ENCODE measurements at regions of chr3 and their contacts with region 1.

Region 1: GRCh38 chr3:99505646-99506269 is 132.6 kb upstream of the COL8A1 start:
- DNase-seq: peak; percentile 91
- ATAC-seq: peak; percentile 97
- H3K4me3 ChIP-seq: no peak overlapping the region
- H3K27ac ChIP-seq: peak overlapping the region; percentile 41
- H3K4me1 ChIP-seq: peaks cover 6% of the 10 kb centered on the region; the same call in 1 of the 2 replicates
- H3K27me3 ChIP-seq: no peaks in the 10 kb centered on the region
- CTCF ChIP-seq: no peak
- EP300 ChIP-seq: peak; percentile 68 to 81; a peak in 3 of 4 replicates
- POLR2A ChIP-seq: no peak
- RAD21 ChIP-seq: peak; percentile 22; the same call in 1 of the 2 replicates

Region 2: DNA sequence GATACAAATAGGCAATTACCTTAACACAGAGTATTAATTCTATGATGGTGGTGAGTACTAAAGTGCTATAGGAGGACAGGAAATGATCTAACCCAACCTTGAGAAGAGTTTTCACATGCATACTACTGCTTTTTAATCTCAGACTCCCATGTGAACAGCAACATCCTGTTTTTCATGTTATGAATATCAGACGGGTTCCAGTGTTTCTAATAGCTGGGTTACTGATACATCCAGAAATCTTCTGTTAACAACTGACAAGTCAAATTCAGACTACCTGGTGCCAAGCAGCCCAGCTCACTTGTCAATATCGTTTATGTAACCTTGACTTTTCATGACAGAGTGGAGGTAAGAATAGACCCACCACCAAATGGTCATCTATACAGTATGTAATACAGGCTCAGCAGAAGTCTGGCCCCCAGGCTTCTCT is 87.5 kb before region 1 on chr3:
- CTCF ChIA-PET with region 1: interaction called, 6 read pairs
- POLR2A ChIA-PET with region 1: no interaction called
- RAD21 ChIA-PET with region 1: interaction called, 4 read pairs
- SMC1A ChIA-PET with region 1: interaction called, 9 read pairs
- in situ Hi-C with region 1: no loop called
- intact Hi-C with region 1: loop called (anchors 1 kb)
- DNase-seq: peak; percentile 52
- ATAC-seq: peak; percentile 82
- H3K4me3 ChIP-seq: no peak overlapping the region
- H3K27ac ChIP-seq: peak overlapping the region; percentile 89
- H3K4me1 ChIP-seq: peaks cover 11% of the 10 kb centered on the region
- H3K27me3 ChIP-seq: no peaks in the 10 kb centered on the region
- CTCF ChIP-seq: no peak
- EP300 ChIP-seq: no peak
- POLR2A ChIP-seq: no peak
- RAD21 ChIP-seq: peak; percentile 20; the same call in 1 of the 2 replicates

Region 3: GRCh38 chr3:99526921-99527320 is 21.2 kb after region 1 on chr3:
- CTCF ChIA-PET with region 1: interaction called, 303 read pairs
- POLR2A ChIA-PET with region 1: interaction called, 3 read pairs
- RAD21 ChIA-PET with region 1: interaction called, 90 read pairs
- SMC1A ChIA-PET with region 1: interaction called, 270 read pairs
- in situ Hi-C with region 1: no loop called
- intact Hi-C with region 1: loop called (anchors 2 kb)
- DNase-seq: no peak
- ATAC-seq: no peak
- H3K4me3 ChIP-seq: no peak overlapping the region
- H3K27ac ChIP-seq: no peak overlapping the region
- H3K4me1 ChIP-seq: no peaks in the 10 kb centered on the region
- H3K27me3 ChIP-seq: no peaks in the 10 kb centered on the region
- CTCF ChIP-seq: no peak
- EP300 ChIP-seq: no peak
- POLR2A ChIP-seq: no peak
- RAD21 ChIP-seq: no peak

Measured in GM12878 (cell line).